ENCODE measurements at regions of chr6 and their contacts with region 1.

Region 1: DNA sequence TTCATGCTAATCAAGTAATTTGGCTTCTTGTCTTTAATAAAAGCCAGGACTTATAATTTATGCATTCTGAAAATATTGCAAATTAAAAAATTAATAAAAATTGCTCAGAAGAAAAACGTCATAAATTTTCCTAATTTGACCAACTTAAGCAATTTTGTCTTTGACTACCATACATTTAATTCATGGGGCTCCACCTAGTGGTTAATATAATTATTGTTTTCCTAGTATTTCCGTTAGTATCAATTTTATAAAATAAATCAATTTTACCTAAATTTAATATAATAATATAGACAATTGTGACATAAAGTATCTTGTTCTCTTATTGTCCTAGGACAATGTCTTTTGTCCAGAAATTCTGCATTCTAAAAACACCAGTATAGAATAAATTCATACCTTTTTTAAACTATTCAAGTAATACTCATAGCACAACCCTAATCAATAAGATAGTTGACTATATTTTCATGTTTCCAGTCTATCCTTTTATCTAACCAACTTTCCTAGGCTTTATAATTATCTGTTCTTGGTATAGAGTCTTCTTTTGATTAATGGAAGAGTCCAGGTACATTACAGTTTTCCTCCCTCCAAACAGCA is 319.9 kb downstream of the TRDN start:
- ATAC-seq: no peak
- H3K4me3 ChIP-seq: no peak overlapping the region
- H3K27ac ChIP-seq: no peak overlapping the region
- H3K4me1 ChIP-seq: no peaks in the 10 kb centered on the region

Region 2: GRCh38 chr6:122869437-122870024 is 447.3 kb before region 1 on chr6:
- in situ Hi-C with region 1: loop called in 4 of 9 experiments (anchors 10 to 25 kb)
- ATAC-seq: peak; percentile 80 to 98 (median 88)
- H3K4me3 ChIP-seq: no peak overlapping the region
- H3K27ac ChIP-seq: no peak overlapping the region
- H3K4me1 ChIP-seq: no peaks in the 10 kb centered on the region

Region 3: DNA sequence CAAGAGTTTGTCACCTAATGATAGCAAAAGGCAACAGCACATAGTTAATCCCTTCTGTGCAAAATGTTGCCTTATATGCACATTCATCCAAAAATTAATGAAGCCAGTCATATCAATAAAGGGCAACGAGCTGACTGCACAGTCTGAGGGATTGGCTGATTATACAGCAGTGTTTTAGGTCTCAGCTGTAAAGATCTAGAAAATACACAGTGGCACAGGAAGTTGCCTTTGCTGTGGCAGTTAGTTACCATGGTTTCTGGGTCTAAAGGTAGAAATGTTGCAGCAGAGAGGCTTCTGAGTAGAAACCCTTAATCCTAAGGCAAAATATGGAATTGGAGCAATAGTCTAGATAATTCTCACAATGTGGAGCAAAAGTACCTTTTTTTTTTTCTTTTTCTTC is 438.0 kb before region 1 on chr6:
- in situ Hi-C with region 1: loop called in 4 of 9 experiments (anchors 25 kb)
- ATAC-seq: peak in 1 of 8 experiments; percentile 75
- H3K4me3 ChIP-seq: no peak overlapping the region
- H3K27ac ChIP-seq: no peak overlapping the region
- H3K4me1 ChIP-seq: no peaks in the 10 kb centered on the region